Activated naive CD4-positive, alpha-beta T cell treated with anti-CD3 and anti-CD28 coated beads for 36 hours (primary cell): ENCODE measurements at regions of chr6 and their contacts with region 1.

Region 1: GRCh38 chr6:31377029-31377428 is 20.1 kb upstream of the HLA-B start:
- DNase-seq: no peak
- H3K4me3 Mint-ChIP-seq: no peak overlapping the region
- H3K27ac Mint-ChIP-seq: no peak overlapping the region
- H3K4me1 Mint-ChIP-seq: peaks cover 2% of the 10 kb centered on the region
- H3K27me3 Mint-ChIP-seq: peaks cover 9% of the 10 kb centered on the region

Region 2: DNA sequence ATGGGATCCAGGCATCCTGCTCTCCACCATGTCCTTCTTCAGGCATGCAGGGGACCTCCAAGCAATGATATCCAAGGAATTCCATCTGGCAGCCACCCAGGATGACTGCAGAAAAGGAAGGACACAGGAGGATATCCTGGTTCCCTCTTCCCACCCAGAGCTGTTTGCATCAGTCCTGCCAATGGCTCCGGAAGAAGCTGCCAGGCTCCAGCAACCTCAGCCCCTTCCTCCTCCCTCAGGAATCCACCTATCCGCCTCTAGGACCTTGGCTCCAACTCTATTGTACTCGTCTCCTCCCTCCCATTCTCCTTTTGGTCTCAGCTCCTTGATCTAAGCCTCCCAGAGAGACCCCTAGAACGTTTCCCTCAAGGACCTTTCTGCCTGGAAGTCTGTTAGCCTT is 237.4 kb before region 1 on chr6:
- CTCF ChIA-PET with region 1: interaction called, 5 read pairs
- intact Hi-C with region 1: loop called (anchors 2 kb)
- DNase-seq: no peak
- H3K4me3 Mint-ChIP-seq: no peak overlapping the region
- H3K27ac Mint-ChIP-seq: no peak overlapping the region
- H3K4me1 Mint-ChIP-seq: peaks cover 4% of the 10 kb centered on the region
- H3K27me3 Mint-ChIP-seq: no peaks in the 10 kb centered on the region

Region 3: DNA sequence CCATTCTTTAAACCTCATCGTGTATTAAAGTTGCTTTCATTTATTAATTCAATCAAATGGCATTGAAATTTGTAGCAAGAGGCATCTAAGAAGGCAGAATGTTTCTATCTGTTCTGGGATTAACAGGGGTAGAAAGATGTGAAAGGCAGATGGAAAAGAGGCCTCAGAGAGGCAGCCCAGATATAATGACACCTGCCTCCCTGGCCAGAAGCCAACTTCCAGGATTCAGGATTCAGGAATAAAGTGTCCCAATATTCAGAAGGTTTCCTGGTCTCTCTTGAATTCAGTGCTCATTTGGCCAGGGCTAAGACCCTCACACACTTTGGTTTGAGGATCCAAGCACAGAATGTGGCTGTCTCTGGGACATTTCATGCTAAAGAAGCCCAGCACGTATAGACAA is 60.0 kb before region 1 on chr6:
- CTCF ChIA-PET with region 1: no interaction called
- intact Hi-C with region 1: no loop called
- DNase-seq: no peak
- H3K4me3 Mint-ChIP-seq: no peak overlapping the region
- H3K27ac Mint-ChIP-seq: no peak overlapping the region
- H3K4me1 Mint-ChIP-seq: no peaks in the 10 kb centered on the region
- H3K27me3 Mint-ChIP-seq: peaks cover 8% of the 10 kb centered on the region